Naive thymus-derived CD4-positive, alpha-beta T cell (primary cell): ENCODE measurements at regions of chr3 and their contacts with region 1.

Region 1: DNA sequence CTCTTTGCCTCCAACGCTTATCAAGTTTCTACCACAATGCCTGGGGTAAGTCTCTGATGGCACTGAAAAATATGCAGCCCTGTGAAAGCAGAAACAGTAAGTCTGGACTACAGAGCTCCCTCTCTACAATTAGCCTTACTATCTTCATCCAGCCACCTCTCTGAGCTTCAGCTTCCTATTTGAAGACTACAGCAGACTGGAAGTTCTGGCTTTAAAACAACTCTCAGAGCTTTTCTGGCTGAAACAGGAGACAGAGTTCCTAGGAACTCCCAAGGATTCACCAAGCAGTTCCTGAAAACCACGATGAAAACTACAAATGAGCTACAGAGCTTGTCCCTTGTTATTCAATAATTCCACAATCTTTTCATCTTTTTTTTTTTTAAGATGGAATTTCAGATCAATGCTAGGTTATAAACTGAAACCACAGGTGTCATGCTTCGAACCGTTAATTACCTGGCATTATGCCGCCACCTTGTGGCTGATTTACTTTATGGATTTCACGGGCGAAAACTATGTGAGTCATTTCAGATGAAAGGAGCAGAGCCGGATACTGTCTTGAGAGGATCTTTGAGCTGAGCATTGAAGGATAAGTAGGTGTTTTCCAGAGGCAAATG is 3.9 kb downstream of the CRYGS start:
- DNase-seq: peak; percentile 48 to 84 (median 81)
- ATAC-seq: peak; percentile 98
- H3K4me3 ChIP-seq: no peak overlapping the region
- H3K4me3 Mint-ChIP-seq: peak overlapping the region in 1 of 10 donors; percentile 20
- H3K27ac ChIP-seq: no peak overlapping the region
- H3K27ac Mint-ChIP-seq: peak overlapping the region in 4 of 9 donors; percentile 13 to 73 (median 41)
- H3K4me1 ChIP-seq: peaks cover 3% of the 10 kb centered on the region in 2 donors
- H3K4me1 Mint-ChIP-seq: peaks cover 7 to 24% (median 8%) of the 10 kb centered on the region in 7 donors
- H3K27me3 ChIP-seq: no peaks in the 10 kb centered on the region
- H3K27me3 Mint-ChIP-seq: no peaks in the 10 kb centered on the region

Region 2: GRCh38 chr3:185659942-185660921 is 880.1 kb before region 1 on chr3:
- CTCF ChIA-PET with region 1: no interaction called
- POLR2A ChIA-PET with region 1: no interaction called
- intact Hi-C with region 1: loop called in 1 of 2 experiments (anchors 1 kb)
- DNase-seq: peak; percentile 35 to 60 (median 46)
- ATAC-seq: peak; percentile 88
- H3K4me3 ChIP-seq: no peak overlapping the region
- H3K4me3 Mint-ChIP-seq: no peak overlapping the region
- H3K27ac ChIP-seq: no peak overlapping the region
- H3K27ac Mint-ChIP-seq: no peak overlapping the region
- H3K4me1 ChIP-seq: no peaks in the 10 kb centered on the region
- H3K4me1 Mint-ChIP-seq: peaks cover 0 to 10% (median 0%) of the 10 kb centered on the region in 7 donors
- H3K27me3 ChIP-seq: no peaks in the 10 kb centered on the region
- H3K27me3 Mint-ChIP-seq: peaks cover 15 to 40% (median 20%) of the 10 kb centered on the region in 5 donors

Region 3: GRCh38 chr3:185976977-185977678 is 563.2 kb before region 1 on chr3:
- CTCF ChIA-PET with region 1: interaction called, 38 read pairs
- POLR2A ChIA-PET with region 1: no interaction called
- intact Hi-C with region 1: loop called (anchors 1 kb)
- DNase-seq: peak; percentile 47 to 84 (median 70)
- ATAC-seq: peak; percentile 96
- H3K4me3 ChIP-seq: no peak overlapping the region
- H3K4me3 Mint-ChIP-seq: peak overlapping the region in 1 of 10 donors; percentile 5
- H3K27ac ChIP-seq: no peak overlapping the region
- H3K27ac Mint-ChIP-seq: peak overlapping the region in 1 of 9 donors; percentile 21
- H3K4me1 ChIP-seq: no peaks in the 10 kb centered on the region
- H3K4me1 Mint-ChIP-seq: peaks cover 4 to 10% (median 9%) of the 10 kb centered on the region in 7 donors
- H3K27me3 ChIP-seq: no peaks in the 10 kb centered on the region
- H3K27me3 Mint-ChIP-seq: peaks cover 0 to 19% (median 0%) of the 10 kb centered on the region in 5 donors

Region 4: DNA sequence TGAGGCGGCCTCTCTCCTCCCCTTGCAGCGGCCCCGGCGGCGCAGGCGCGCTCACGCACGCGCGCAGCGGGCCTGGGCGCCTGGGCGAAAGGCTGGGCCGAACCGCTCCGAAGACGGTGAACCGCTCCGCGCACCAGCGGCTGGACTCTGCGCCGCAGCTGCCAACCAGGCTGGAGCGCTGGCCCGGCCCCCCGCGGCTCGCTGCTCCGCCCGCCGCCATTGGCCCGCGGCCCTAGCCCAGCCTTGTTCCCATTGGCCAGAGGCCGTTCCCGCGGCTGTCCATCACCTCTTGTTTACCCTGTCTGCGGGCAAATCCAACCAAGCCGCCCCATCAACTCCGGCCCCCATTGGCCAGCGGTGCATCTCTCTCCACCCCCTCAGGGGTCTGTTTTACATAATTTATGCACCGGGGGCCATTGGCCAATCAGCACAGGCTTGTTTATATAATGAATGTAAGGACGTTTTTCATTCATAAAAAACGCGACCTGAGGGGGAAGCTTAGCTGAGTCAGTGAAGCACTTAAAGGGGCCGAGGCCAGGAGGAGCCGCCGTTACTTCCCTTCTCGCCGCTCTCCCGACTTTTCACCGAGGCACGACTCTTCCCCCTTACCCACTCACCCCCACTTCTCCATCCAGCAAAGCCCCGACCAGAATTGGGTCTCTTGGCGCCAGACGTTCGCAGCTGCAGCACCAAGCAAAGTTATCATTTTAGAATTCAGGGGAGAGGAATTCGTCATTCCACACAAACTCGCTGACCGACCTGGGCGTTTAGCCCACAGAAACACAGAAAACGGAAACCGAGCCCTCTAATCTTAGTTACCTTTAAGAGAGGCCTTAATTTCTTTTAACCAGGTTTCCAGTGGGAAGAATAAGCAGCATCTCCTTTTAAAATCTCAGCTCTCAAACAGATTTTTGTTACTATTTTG is 431.1 kb before region 1 on chr3 and contains the start of gene ETV5:
- CTCF ChIA-PET with region 1: no interaction called
- POLR2A ChIA-PET with region 1: no interaction called
- intact Hi-C with region 1: loop called in 1 of 2 experiments (anchors 2 kb)
- DNase-seq: peak; percentile 65 to 91 (median 79)
- ATAC-seq: peak; percentile 97
- H3K4me3 ChIP-seq: peak within 1 kb of the TSS; percentile 71
- H3K4me3 Mint-ChIP-seq: peak within 1 kb of the TSS; percentile 86 to 97 (median 90)
- H3K27ac ChIP-seq: no peak within 1 kb of the TSS
- H3K27ac Mint-ChIP-seq: peak within 1 kb of the TSS in 5 of 9 donors; percentile 7 to 90 (median 60)
- H3K4me1 ChIP-seq: peaks cover 23 to 35% of the 10 kb centered on the region in 2 donors
- H3K4me1 Mint-ChIP-seq: peaks cover 34 to 38% (median 38%) of the 10 kb centered on the region in 7 donors
- H3K27me3 ChIP-seq: peaks cover 22 to 54% of the 10 kb centered on the region in 2 donors
- H3K27me3 Mint-ChIP-seq: peaks cover 84 to 87% (median 86%) of the 10 kb centered on the region in 5 donors
- total RNA-seq, gene ETV5: 0.56 to 2.3 (median 0.97) TPM in 4 of 5 experiments, not detected in the other

Region 5: GRCh38 chr3:186381424-186382216 is 158.7 kb before region 1 on chr3:
- CTCF ChIA-PET with region 1: no interaction called
- POLR2A ChIA-PET with region 1: no interaction called
- intact Hi-C with region 1: no loop called
- DNase-seq: no peak
- ATAC-seq: no peak
- H3K4me3 ChIP-seq: no peak overlapping the region
- H3K4me3 Mint-ChIP-seq: no peak overlapping the region
- H3K27ac ChIP-seq: no peak overlapping the region
- H3K27ac Mint-ChIP-seq: no peak overlapping the region
- H3K4me1 ChIP-seq: no peaks in the 10 kb centered on the region
- H3K4me1 Mint-ChIP-seq: peaks cover 0 to 4% (median 0%) of the 10 kb centered on the region in 7 donors
- H3K27me3 ChIP-seq: no peaks in the 10 kb centered on the region
- H3K27me3 Mint-ChIP-seq: peaks cover 0 to 15% (median 9%) of the 10 kb centered on the region in 5 donors

Region 6: DNA sequence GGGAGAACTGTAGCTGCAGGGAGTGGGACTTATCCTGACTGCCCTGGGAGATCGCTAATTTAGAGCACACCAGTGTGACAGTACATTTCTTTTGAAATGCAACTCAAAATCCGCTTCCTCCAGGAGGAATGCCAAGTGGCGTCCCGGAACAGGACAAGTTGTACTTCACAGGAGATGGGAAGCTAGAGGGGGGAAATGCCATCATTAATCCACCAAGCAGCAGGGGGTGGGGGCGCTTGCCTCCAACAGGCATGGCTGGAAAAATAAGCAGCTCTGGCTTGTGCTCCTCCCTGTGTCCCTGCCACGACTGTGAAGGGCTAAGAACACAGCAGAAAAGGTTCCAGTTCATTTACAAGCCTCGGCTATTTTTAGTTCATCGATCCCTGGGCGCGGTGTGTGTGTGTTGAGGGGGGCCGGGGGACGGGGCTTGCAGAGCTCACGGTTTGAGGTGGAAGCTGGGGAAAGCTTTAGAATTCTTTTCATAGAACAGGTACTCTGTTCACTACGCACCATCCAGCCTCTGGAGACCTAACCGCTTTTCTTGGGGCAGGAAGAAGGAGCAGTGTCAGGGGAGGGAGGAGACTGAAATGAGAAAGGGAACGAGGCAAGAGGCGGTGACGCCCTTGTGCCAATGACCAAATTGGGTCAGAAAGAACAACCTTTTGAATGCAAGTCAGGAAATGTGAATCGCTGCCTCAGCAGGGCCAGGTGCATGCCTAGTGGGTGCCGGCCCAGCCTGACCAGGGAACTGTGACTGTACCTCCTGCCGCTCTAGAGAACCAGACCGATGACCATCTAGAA is 126.5 kb before region 1 on chr3:
- CTCF ChIA-PET with region 1: no interaction called
- POLR2A ChIA-PET with region 1: no interaction called
- intact Hi-C with region 1: loop called (anchors 2 to 10 kb)
- DNase-seq: peak in 3 of 9 donors; percentile 1 to 5 (median 3)
- ATAC-seq: peak; percentile 55
- H3K4me3 ChIP-seq: peak overlapping the region; percentile 47
- H3K4me3 Mint-ChIP-seq: peak overlapping the region; percentile 61 to 87 (median 74)
- H3K27ac ChIP-seq: no peak overlapping the region
- H3K27ac Mint-ChIP-seq: peak overlapping the region in 4 of 9 donors; percentile 10 to 46 (median 36)
- H3K4me1 ChIP-seq: peaks cover 0 to 13% of the 10 kb centered on the region in 2 donors
- H3K4me1 Mint-ChIP-seq: peaks cover 9 to 29% (median 20%) of the 10 kb centered on the region in 7 donors
- H3K27me3 ChIP-seq: no peaks in the 10 kb centered on the region
- H3K27me3 Mint-ChIP-seq: peaks cover 0 to 26% (median 7%) of the 10 kb centered on the region in 5 donors

Region 7: DNA sequence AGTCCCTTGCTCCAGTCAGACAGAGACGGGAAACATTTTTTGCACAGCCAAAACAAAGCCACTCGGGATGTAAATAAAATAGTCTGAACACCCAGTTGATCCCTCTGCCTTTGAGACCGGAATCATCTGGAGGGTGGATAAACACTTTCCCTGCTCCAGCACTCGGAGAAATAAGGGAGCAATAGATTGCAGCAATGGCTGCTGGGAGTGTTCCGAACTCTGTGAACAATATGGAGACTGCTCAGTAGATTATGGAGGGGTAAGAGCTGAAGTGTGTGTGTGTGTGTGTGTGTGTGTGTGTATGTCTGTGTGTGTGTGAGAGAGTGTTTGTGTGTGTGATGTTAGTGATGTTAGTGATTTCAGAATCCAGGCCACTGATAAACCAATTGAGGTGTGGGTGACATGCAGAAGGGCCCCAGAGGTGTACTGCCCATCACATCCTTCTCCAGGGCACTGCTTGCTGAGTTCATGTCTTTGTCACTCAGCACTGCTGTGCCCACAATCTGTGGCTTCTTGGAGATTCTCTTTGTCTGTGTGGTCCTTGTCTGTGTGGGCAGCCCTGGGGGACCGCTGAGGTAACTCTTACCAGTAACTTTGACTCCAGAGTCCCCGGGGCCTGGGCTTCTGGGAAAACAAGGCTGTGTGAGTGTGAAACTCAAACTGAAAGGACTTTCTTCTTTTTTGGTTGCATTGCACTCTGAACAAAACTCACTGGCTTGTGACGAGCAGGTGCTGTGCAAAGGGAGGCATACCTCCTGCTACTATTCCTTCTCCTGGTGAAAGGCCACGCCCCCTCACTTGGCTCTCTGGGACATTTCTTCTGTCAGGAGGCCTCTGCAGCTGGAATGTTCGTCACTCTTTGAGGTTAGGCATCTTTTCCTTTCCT is 19.1 kb before region 1 on chr3:
- CTCF ChIA-PET with region 1: interaction called, 19 read pairs
- POLR2A ChIA-PET with region 1: interaction called, 7 read pairs
- intact Hi-C with region 1: loop called in 1 of 2 experiments (anchors 2 kb)
- DNase-seq: no peak
- ATAC-seq: no peak
- H3K4me3 ChIP-seq: no peak overlapping the region
- H3K4me3 Mint-ChIP-seq: peak overlapping the region in 1 of 10 donors; percentile 24
- H3K27ac ChIP-seq: no peak overlapping the region
- H3K27ac Mint-ChIP-seq: peak overlapping the region in 3 of 9 donors; percentile 3 to 31 (median 22)
- H3K4me1 ChIP-seq: peaks cover 35 to 36% of the 10 kb centered on the region in 2 donors
- H3K4me1 Mint-ChIP-seq: peaks cover 29 to 59% (median 44%) of the 10 kb centered on the region in 7 donors
- H3K27me3 ChIP-seq: no peaks in the 10 kb centered on the region
- H3K27me3 Mint-ChIP-seq: peaks cover 0 to 3% (median 0%) of the 10 kb centered on the region in 5 donors